Sciatic nerve (tissue), 2 donors: ENCODE measurements at regions of chr2 and their contacts with region 1.

Region 1: GRCh38 chr2:161570424-161571050 is 53.7 kb upstream of the SLC4A10 start:
- DNase-seq: no peak
- ATAC-seq: no peak

Region 2: DNA sequence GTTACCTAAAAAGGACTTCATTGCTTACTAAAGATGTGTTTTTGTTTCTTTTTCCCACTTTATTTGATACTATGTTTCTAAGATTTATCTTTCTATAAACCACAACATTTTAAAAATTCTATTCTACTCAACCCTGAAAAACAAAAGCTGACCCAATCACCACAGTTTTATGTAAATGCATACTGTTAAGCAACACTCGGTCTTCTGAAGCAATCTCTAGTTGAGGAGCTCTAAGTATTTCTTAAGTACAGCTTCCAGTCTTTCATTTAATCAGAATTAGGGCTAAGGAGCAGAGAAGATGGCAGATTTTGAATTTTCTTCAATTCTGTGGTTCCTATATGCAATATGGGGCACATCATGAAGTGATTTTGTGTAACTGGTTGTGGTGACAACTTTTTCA is 18.5 kb before region 1 on chr2:
- intact Hi-C with region 1: loop called (anchors 2 kb)
- DNase-seq: no peak
- ATAC-seq: no peak